CD8-positive, alpha-beta memory T cell (primary cell): ENCODE measurements at regions of chr19 and their contacts with region 1.

Region 1: GRCh38 chr19:16076154-16076957 is at the start of gene TPM4:
- DNase-seq: peak; percentile 71 to 87 (median 82)
- H3K4me3 ChIP-seq: peak within 1 kb of the TSS; percentile 69
- H3K4me3 Mint-ChIP-seq: peak within 1 kb of the TSS; percentile 77 to 95 (median 88)
- H3K27ac ChIP-seq: peak within 1 kb of the TSS; percentile 83
- H3K27ac Mint-ChIP-seq: peak within 1 kb of the TSS; percentile 93 to 98 (median 98)
- H3K4me1 ChIP-seq: peaks cover 74% of the 10 kb centered on the region
- H3K4me1 Mint-ChIP-seq: peaks cover 58 to 78% (median 64%) of the 10 kb centered on the region in 3 donors
- H3K27me3 ChIP-seq: no peaks in the 10 kb centered on the region
- H3K27me3 Mint-ChIP-seq: peaks cover 0 to 1% of the 10 kb centered on the region in 2 donors
- total RNA-seq, gene TPM4: 259 to 270 TPM

Region 2: GRCh38 chr19:16095071-16095571 is 18.8 kb after region 1 on chr19:
- CTCF ChIA-PET with region 1: interaction called, 5 read pairs
- POLR2A ChIA-PET with region 1: interaction called, 12 read pairs
- DNase-seq: peak in 1 of 5 donors; percentile 62
- H3K4me3 ChIP-seq: no peak overlapping the region
- H3K4me3 Mint-ChIP-seq: no peak overlapping the region
- H3K27ac ChIP-seq: no peak overlapping the region
- H3K27ac Mint-ChIP-seq: peak overlapping the region; percentile 21 to 87 (median 70)
- H3K4me1 ChIP-seq: peaks cover 12% of the 10 kb centered on the region
- H3K4me1 Mint-ChIP-seq: peaks cover 14 to 19% (median 18%) of the 10 kb centered on the region in 3 donors
- H3K27me3 ChIP-seq: no peaks in the 10 kb centered on the region
- H3K27me3 Mint-ChIP-seq: no peaks in the 10 kb centered on the region